GM12878 (cell line): ENCODE measurements at regions of chr2 and their contacts with region 1.

Region 1: DNA sequence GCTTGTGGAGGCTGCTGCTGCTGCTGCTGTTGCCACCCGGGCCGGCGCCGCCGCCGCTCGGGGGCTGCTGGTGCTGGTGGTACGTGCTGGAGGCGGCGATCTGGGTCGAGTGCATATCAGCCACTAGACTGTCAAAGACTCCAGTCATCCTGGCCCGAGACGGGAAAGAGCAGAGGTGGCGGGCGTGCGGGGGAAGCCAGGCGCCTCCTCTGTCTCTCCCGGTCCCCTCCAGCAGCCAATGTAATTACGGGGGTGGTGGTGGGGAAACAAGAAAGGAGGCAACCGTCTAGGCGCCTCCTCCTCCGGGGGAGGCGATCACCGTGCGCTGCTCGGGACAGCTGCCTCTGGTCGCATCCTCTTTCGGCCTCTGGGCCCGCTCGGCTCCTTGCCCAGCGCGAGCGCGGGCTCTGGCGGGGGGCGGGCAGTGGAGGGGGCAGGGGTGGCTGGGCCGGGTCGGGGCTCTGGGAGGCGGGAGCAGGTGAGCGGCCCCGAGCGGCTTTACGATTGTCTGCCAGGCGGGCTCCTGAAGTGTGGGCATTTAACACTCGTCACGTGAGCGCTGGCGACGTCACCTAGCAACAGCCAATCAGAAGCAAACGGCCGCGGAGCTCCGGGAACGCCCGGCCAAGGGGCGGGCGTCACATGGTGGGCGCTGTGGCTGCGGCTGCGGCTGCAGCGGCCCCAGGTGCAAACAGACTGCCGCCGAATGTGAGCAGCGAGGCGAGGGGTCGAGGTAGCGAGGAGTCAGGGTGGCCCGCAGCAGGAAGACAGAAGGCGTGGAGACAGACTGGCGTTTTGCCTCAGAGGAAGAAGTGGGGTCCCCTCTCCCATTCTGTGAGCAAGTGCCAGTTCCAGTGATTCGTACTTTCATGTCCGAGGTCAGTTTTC is at the start of gene DLX2:
- DNase-seq: no peak
- ATAC-seq: peak; percentile 82
- H3K4me3 ChIP-seq: peak within 1 kb of the TSS; percentile 56
- H3K27ac ChIP-seq: no peak within 1 kb of the TSS
- H3K4me1 ChIP-seq: peaks cover 30% of the 10 kb centered on the region
- H3K27me3 ChIP-seq: peaks cover 27 to 39% of the 10 kb centered on the region in 2 experiments
- CTCF ChIP-seq: no peak
- EP300 ChIP-seq: no peak
- POLR2A ChIP-seq: peak; percentile 47; the same call in 1 of the 2 replicates
- RAD21 ChIP-seq: no peak
- polyA plus RNA-seq, gene DLX2: not detected

Region 2: GRCh38 chr2:170973492-170974303 is 1128.9 kb before region 1 on chr2:
- CTCF ChIA-PET with region 1: no interaction called
- POLR2A ChIA-PET with region 1: no interaction called
- RAD21 ChIA-PET with region 1: interaction called, 3 read pairs
- SMC1A ChIA-PET with region 1: interaction called, 3 read pairs
- in situ Hi-C with region 1: loop called (anchors 10 kb)
- intact Hi-C with region 1: no loop called
- DNase-seq: peak; percentile 64
- ATAC-seq: peak; percentile 97
- H3K4me3 ChIP-seq: peak overlapping the region; percentile 78
- H3K27ac ChIP-seq: peak overlapping the region; percentile 72
- H3K4me1 ChIP-seq: peaks cover 10% of the 10 kb centered on the region
- H3K27me3 ChIP-seq: no peaks in the 10 kb centered on the region
- CTCF ChIP-seq: peak; percentile 88 to 96 (median 89)
- EP300 ChIP-seq: peak in 1 of 2 experiments; percentile 40; a peak in 1 of 4 replicates
- POLR2A ChIP-seq: peak; percentile 74
- RAD21 ChIP-seq: peak; percentile 90

Region 3: DNA sequence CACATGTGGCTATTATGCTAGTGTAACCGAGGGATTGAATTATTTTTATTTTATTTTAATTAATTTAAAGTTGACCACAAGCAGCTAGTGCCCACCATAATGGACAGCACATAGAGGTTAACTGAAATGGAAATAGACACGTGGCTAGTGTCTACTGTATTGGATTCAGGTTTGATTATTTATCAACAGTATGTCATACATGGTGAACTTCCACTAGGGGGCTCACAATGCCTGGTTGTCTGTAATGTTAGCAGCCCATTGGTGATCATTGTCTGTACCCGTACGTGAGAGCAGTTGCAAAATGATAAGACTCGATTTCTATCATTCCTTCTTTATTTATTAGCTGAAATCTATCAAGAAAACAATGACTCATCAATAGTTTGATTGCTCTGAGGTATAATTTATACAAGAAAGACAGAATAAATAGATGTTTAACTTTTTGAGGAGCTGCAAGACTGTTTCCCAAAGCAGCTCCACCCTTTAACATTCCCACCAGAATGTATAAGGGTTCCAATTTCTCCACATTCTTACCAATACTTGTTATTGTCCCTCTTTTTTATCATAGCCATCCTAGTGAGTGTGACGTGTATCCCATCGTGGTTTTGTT is 503.8 kb before region 1 on chr2:
- CTCF ChIA-PET with region 1: interaction called, 8 read pairs
- POLR2A ChIA-PET with region 1: no interaction called
- RAD21 ChIA-PET with region 1: interaction called, 3 read pairs
- SMC1A ChIA-PET with region 1: interaction called, 9 read pairs
- in situ Hi-C with region 1: loop called (anchors 10 kb)
- intact Hi-C with region 1: loop called (anchors 2 kb)
- DNase-seq: peak; percentile 24
- ATAC-seq: peak; percentile 100
- H3K4me3 ChIP-seq: no peak overlapping the region
- H3K27ac ChIP-seq: no peak overlapping the region
- H3K4me1 ChIP-seq: no peaks in the 10 kb centered on the region
- H3K27me3 ChIP-seq: no peaks in the 10 kb centered on the region
- CTCF ChIP-seq: peak; percentile 71 to 85 (median 82)
- EP300 ChIP-seq: no peak
- POLR2A ChIP-seq: no peak
- RAD21 ChIP-seq: peak; percentile 77

Region 4: GRCh38 chr2:171957061-171957460 is 145.6 kb before region 1 on chr2:
- CTCF ChIA-PET with region 1: interaction called, 4 read pairs
- POLR2A ChIA-PET with region 1: no interaction called
- RAD21 ChIA-PET with region 1: no interaction called
- SMC1A ChIA-PET with region 1: no interaction called
- in situ Hi-C with region 1: no loop called
- intact Hi-C with region 1: loop called (anchors 10 kb)
- DNase-seq: no peak
- ATAC-seq: no peak; the same call in 2 of the 3 replicates
- H3K4me3 ChIP-seq: no peak overlapping the region
- H3K27ac ChIP-seq: no peak overlapping the region
- H3K4me1 ChIP-seq: no peaks in the 10 kb centered on the region; the same call in 1 of the 2 replicates
- H3K27me3 ChIP-seq: no peaks in the 10 kb centered on the region
- CTCF ChIP-seq: peak in 2 of 3 experiments; percentile 7 to 27; a peak in 2 of 6 replicates
- EP300 ChIP-seq: no peak
- POLR2A ChIP-seq: no peak
- RAD21 ChIP-seq: 0 out of 2 replicates have a peak, but pooled peaks have one; percentile 18

Region 5: GRCh38 chr2:172031536-172031935 is 71.1 kb before region 1 on chr2:
- CTCF ChIA-PET with region 1: no interaction called
- POLR2A ChIA-PET with region 1: no interaction called
- RAD21 ChIA-PET with region 1: no interaction called
- SMC1A ChIA-PET with region 1: no interaction called
- in situ Hi-C with region 1: no loop called
- intact Hi-C with region 1: no loop called
- DNase-seq: no peak
- ATAC-seq: no peak
- H3K4me3 ChIP-seq: no peak overlapping the region
- H3K27ac ChIP-seq: no peak overlapping the region
- H3K4me1 ChIP-seq: no peaks in the 10 kb centered on the region
- H3K27me3 ChIP-seq: no peaks in the 10 kb centered on the region
- CTCF ChIP-seq: no peak
- EP300 ChIP-seq: no peak
- POLR2A ChIP-seq: no peak
- RAD21 ChIP-seq: no peak

Region 6: DNA sequence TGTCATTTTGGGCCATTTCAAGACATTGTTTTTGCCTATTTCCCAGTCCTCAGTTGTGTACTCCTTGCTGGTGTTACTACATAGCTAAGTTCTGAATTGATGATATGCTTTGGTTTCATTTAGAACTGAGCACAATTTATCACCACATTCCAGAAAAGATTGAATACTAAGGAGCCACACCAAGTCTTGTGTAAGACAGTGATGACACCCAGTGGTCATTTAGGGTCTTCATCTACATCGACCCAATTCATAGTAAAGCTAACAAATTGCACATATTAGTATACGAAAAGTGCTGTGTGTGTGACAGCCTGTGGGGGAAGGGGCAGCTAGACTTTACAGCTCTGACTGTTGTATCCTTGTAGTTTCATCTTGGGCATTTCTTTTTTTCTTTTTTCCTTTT is 11.0 kb after region 1 on chr2:
- CTCF ChIA-PET with region 1: interaction called, 23 read pairs
- POLR2A ChIA-PET with region 1: no interaction called
- RAD21 ChIA-PET with region 1: interaction called, 3 read pairs
- SMC1A ChIA-PET with region 1: interaction called, 8 read pairs
- in situ Hi-C with region 1: no loop called
- intact Hi-C with region 1: no loop called
- DNase-seq: no peak
- ATAC-seq: peak; percentile 68
- H3K4me3 ChIP-seq: no peak overlapping the region
- H3K27ac ChIP-seq: no peak overlapping the region
- H3K4me1 ChIP-seq: no peaks in the 10 kb centered on the region
- H3K27me3 ChIP-seq: 0 out of 4 replicates have a peak, but pooled peaks cover 0 to 1% of the 10 kb centered on the region in 2 experiments
- CTCF ChIP-seq: peak in 2 of 3 experiments; percentile 33 to 55; a peak in 4 of 6 replicates
- EP300 ChIP-seq: no peak
- POLR2A ChIP-seq: no peak
- RAD21 ChIP-seq: peak; percentile 59

Region 7: GRCh38 chr2:172147944-172148650 is 45.5 kb after region 1 on chr2:
- CTCF ChIA-PET with region 1: no interaction called
- POLR2A ChIA-PET with region 1: no interaction called
- RAD21 ChIA-PET with region 1: no interaction called
- SMC1A ChIA-PET with region 1: no interaction called
- in situ Hi-C with region 1: no loop called
- intact Hi-C with region 1: no loop called
- DNase-seq: no peak
- ATAC-seq: no peak
- H3K4me3 ChIP-seq: no peak overlapping the region
- H3K27ac ChIP-seq: no peak overlapping the region
- H3K4me1 ChIP-seq: no peaks in the 10 kb centered on the region
- H3K27me3 ChIP-seq: no peaks in the 10 kb centered on the region; a peak in 2 of 4 replicates
- CTCF ChIP-seq: no peak
- EP300 ChIP-seq: no peak
- POLR2A ChIP-seq: no peak
- RAD21 ChIP-seq: no peak

Region 8: DNA sequence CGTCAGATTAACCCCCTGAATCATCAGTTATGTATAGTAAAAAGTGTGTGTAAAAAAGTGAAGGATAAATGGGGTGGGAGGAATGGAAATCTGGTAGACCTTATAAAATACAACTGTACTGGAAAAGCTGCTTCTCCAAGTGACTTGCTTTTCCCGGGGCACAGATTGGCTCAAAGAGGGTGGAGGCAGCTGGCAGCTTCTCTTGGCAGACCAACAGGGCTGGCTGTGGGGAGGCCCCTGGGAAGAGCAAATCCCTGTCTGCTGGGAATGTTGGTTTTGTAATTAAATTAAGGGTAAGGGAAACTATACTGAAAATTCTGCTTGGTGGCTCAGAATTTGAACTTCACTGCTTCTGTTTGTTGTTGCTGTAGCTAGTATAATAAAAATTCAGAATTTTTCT is 154.3 kb after region 1 on chr2:
- CTCF ChIA-PET with region 1: no interaction called
- POLR2A ChIA-PET with region 1: no interaction called
- RAD21 ChIA-PET with region 1: no interaction called
- SMC1A ChIA-PET with region 1: no interaction called
- in situ Hi-C with region 1: no loop called
- intact Hi-C with region 1: no loop called
- DNase-seq: no peak
- ATAC-seq: no peak
- H3K4me3 ChIP-seq: no peak overlapping the region
- H3K27ac ChIP-seq: no peak overlapping the region
- H3K4me1 ChIP-seq: no peaks in the 10 kb centered on the region
- H3K27me3 ChIP-seq: peaks cover 0 to 3% of the 10 kb centered on the region in 2 experiments; a peak in 1 of 4 replicates
- CTCF ChIP-seq: no peak
- EP300 ChIP-seq: no peak
- POLR2A ChIP-seq: no peak
- RAD21 ChIP-seq: no peak

Region 9: DNA sequence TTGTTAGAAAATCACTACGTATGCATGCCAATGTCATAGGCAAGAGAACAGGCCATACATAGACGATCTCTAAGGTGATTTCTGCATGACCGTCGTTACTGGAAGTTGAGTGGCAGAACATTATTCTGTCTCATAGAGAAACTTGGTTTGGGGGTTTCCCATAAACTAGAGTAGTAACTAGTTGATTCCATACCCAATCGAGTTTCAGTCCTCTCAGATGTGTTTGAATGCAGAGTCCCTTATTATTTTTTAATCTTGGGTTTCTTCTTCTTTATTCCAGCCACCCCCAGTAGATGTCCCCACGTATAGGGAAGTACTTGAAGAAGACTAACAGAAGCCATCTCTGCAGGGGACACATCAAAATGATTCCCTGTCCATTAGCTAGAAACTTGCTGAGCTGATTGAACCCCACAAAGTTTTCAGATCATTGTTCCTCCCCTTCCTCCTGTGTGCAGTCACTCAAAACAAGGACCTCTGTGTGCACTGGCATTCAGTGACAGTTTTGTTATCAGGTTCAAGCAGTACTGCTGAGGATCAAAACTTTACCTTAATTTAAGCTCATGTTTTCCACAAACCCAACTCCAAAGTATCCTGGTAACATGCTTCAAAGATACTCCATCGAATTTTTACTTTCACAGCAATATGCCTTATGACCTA is 1183.6 kb after region 1 on chr2:
- CTCF ChIA-PET with region 1: no interaction called
- POLR2A ChIA-PET with region 1: no interaction called
- RAD21 ChIA-PET with region 1: no interaction called
- SMC1A ChIA-PET with region 1: no interaction called
- in situ Hi-C with region 1: no loop called
- intact Hi-C with region 1: no loop called
- DNase-seq: peak; percentile 25
- ATAC-seq: peak; percentile 78
- H3K4me3 ChIP-seq: no peak overlapping the region
- H3K27ac ChIP-seq: no peak overlapping the region
- H3K4me1 ChIP-seq: peaks cover 9% of the 10 kb centered on the region
- H3K27me3 ChIP-seq: no peaks in the 10 kb centered on the region
- CTCF ChIP-seq: peak in 2 of 3 experiments; percentile 14 to 26; a peak in 2 of 6 replicates
- EP300 ChIP-seq: no peak
- POLR2A ChIP-seq: no peak
- RAD21 ChIP-seq: peak; percentile 44